ENCODE measurements at regions of chr6 and their contacts with region 1.

Region 1: GRCh38 chr6:24283043-24283985 is 74.5 kb downstream of the DCDC2 start:
- DNase-seq: peak; percentile 67 to 84 (median 78)
- ATAC-seq: peak; percentile 93 to 97 (median 96)
- H3K4me3 ChIP-seq: peak overlapping the region in 2 of 4 donors; percentile 3 to 21
- H3K27ac ChIP-seq: peak overlapping the region in 1 of 4 donors; percentile 55
- H3K4me1 ChIP-seq: peaks cover 0 to 15% (median 12%) of the 10 kb centered on the region in 3 donors
- H3K27me3 ChIP-seq: no peaks in the 10 kb centered on the region
- CTCF ChIP-seq: peak; percentile 35 to 57 (median 46)

Region 2: GRCh38 chr6:24385536-24386269 is 102.4 kb after region 1 on chr6:
- intact Hi-C with region 1: loop called in 2 of 3 experiments (anchors 5 to 10 kb)
- DNase-seq: no peak
- ATAC-seq: peak in 1 of 4 donors; percentile 49
- H3K4me3 ChIP-seq: no peak overlapping the region
- H3K27ac ChIP-seq: peak overlapping the region in 2 of 4 donors; percentile 2 to 20
- H3K4me1 ChIP-seq: no peaks in the 10 kb centered on the region
- H3K27me3 ChIP-seq: no peaks in the 10 kb centered on the region
- CTCF ChIP-seq: no peak